ENCODE measurements at regions of chr19 and their contacts with region 1.

Region 1: DNA sequence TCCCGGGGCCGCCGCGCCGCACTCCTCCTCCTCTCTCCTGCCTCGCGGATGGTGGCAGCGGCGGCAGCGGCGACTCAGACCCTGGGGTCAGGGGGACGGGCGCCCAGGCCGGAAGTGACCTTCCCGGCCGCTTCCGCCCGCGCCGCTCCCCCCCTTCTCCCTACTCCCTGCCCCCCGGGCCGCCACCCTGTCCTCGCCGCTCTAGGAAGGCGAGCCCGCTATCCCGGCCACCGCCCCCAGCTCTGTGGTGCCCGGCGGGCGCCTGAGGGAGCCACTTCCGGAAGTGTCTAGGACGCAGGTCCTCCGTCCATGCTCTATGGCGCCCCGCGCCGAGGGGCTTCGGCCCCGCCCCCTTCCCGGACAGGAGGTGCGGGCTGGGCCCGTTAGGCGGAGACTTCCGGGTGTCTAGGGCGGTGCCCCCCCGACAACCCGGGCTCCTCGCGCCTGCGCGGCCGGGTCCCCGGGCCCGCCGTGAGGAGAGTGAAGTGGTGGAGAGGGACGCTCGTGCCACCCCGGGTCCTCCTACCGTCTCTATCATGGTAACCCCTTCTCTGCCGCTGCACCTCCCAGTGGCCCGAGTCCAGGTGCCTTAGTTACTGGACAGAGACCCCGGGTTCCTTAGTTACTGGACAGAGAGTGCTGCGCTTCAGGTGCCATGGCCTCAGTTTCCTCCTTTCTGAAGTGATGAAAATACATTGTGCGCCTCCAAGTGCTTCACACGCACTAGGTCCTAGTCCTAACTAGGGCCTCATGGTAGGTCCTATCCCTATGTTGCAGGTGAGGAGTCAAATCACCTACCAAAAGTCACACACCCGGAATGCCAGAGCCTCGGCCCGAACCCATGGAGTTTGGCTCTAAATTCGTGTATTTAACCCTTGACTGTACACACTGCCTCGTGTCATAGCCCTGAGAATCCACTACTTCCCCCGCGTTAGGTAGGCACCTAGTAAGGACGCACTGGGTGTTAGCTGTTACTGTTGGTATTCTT is at the start of gene ZNF787:
- DNase-seq: peak; percentile 99
- ATAC-seq: peak; percentile 94
- total RNA-seq, gene ZNF787: 35.3 TPM

Region 2: GRCh38 chr19:56105090-56105701 is 16.3 kb before region 1 on chr19:
- intact Hi-C with region 1: loop called (anchors 1 kb)
- DNase-seq: peak; percentile 88
- ATAC-seq: peak; percentile 77

Region 3: GRCh38 chr19:56140583-56141416 is 19.3 kb after region 1 on chr19 and contains the start of gene ZNF444:
- intact Hi-C with region 1: loop called (anchors 1 kb)
- DNase-seq: peak; percentile 98
- ATAC-seq: peak; percentile 96
- total RNA-seq, gene ZNF444: 29.1 TPM

Region 4: DNA sequence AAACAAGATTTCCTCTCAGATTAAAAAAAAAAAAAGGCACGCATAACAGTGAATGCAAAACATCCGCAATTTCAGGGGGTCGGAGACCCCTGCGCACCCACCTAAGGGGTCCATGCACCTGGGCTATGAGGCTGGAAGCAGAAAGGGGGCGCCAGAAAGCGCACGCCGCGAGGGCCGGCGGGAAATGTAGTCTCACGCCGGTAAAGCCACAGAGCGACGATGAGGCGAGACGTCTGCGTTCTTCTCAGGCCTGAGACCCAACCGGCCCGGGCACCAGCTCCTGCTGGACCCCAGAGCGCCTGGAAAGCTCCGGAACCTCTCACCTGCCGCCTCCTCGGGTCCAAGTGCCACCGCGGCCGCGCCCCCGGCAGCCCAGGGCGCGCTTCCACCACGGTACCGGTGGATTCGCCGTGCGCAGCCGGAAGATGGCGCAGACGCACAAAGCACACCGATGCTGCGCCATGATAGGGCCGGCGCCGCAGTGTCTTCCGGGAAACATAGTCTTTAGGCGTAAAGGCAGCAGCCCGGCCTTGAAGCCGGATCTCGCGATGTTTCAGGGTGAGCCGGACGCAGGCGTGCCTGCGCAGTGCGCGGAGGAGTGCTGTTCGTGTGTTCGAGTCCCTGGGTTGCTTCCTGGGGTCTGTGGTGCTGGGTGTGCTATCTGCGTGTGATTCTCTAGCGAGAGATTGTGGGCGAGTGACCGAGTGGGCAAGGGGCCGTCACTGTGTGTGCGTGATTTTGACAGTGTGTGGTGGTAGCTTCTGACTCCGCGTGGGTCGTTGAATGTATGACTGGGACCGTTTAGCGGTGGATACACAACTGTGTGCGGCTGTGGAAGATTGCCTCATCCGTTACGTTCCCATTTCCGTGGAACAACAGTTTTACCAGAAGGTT is 271.9 kb after region 1 on chr19 and contains the start of gene ZNF582:
- intact Hi-C with region 1: no loop called
- DNase-seq: peak; percentile 99
- ATAC-seq: peak; percentile 100
- total RNA-seq, gene ZNF582: 3.6 TPM

Region 5: GRCh38 chr19:56987184-56987583 is 865.7 kb after region 1 on chr19:
- intact Hi-C with region 1: no loop called
- DNase-seq: no peak
- ATAC-seq: no peak

Measured in Right ventricle myocardium inferior (tissue), 1 donor.